Activated CD4-positive, alpha-beta T cell treated with anti-CD3 and anti-CD28 coated beads for 36 hours (primary cell): ENCODE measurements at regions of chr12 and their contacts with region 1.

Region 1: GRCh38 chr12:14239350-14239934 is 126.0 kb upstream of the ATF7IP start:
- DNase-seq: peak; percentile 63
- ATAC-seq: peak; percentile 86
- H3K4me3 Mint-ChIP-seq: peak overlapping the region; percentile 62
- H3K27ac Mint-ChIP-seq: peak overlapping the region; percentile 89
- H3K4me1 Mint-ChIP-seq: peaks cover 20% of the 10 kb centered on the region
- H3K27me3 Mint-ChIP-seq: no peaks in the 10 kb centered on the region

Region 2: GRCh38 chr12:14148489-14149270 is 90.8 kb before region 1 on chr12:
- CTCF ChIA-PET with region 1: no interaction called
- POLR2A ChIA-PET with region 1: no interaction called
- intact Hi-C with region 1: no loop called
- DNase-seq: no peak
- ATAC-seq: no peak
- H3K4me3 Mint-ChIP-seq: no peak overlapping the region
- H3K27ac Mint-ChIP-seq: no peak overlapping the region
- H3K4me1 Mint-ChIP-seq: no peaks in the 10 kb centered on the region
- H3K27me3 Mint-ChIP-seq: peaks cover 4% of the 10 kb centered on the region

Region 3: GRCh38 chr12:14216405-14217294 is 22.8 kb before region 1 on chr12:
- CTCF ChIA-PET with region 1: interaction called, 10 read pairs
- POLR2A ChIA-PET with region 1: interaction called, 4 read pairs
- intact Hi-C with region 1: no loop called
- DNase-seq: no peak
- ATAC-seq: peak; percentile 50
- H3K4me3 Mint-ChIP-seq: peak overlapping the region; percentile 21
- H3K27ac Mint-ChIP-seq: peak overlapping the region; percentile 80
- H3K4me1 Mint-ChIP-seq: peaks cover 27% of the 10 kb centered on the region
- H3K27me3 Mint-ChIP-seq: no peaks in the 10 kb centered on the region

Region 4: DNA sequence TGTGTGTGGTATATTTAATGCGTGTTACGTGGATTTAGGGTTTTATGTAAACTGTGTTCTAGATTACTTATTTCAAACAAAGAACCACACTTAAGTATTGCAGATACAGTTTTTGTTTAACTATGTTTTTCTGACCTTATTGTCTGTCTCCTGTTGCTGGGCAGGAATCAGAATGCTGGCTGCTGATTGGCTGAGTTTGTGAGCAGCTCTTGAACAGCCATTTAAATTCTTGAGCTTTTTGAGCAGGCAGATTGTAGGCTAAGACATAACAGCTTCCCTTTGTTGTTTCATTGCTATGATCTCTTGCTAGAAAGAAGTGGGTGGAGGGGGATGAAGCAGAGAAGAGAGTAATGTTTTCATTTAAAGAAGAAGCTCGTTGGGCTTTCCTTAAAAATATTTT is 178.3 kb after region 1 on chr12:
- CTCF ChIA-PET with region 1: interaction called, 9 read pairs
- POLR2A ChIA-PET with region 1: interaction called, 4 read pairs
- intact Hi-C with region 1: loop called (anchors 1 kb)
- DNase-seq: peak; percentile 86
- ATAC-seq: peak; percentile 76
- H3K4me3 Mint-ChIP-seq: peak overlapping the region; percentile 56
- H3K27ac Mint-ChIP-seq: peak overlapping the region; percentile 92
- H3K4me1 Mint-ChIP-seq: peaks cover 59% of the 10 kb centered on the region
- H3K27me3 Mint-ChIP-seq: no peaks in the 10 kb centered on the region

Region 5: DNA sequence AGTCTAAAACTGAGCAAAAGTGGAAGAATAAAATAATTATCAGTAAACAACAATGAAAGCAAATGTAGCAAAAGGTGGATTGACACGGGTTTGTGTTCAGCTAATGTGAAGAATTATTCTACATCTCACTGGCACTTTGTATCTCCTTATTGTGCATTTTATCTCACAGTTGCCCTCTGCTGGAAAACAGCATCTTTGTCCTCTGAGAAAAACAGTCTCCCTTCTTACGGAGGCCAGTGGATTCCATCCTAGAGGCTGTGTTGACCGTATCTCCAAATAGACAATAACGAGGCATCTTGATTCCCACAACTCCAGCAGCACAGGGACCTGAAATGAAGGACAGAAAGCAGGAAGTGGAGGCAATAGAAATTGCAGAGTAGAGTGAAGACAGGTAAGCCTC is 379.5 kb after region 1 on chr12:
- CTCF ChIA-PET with region 1: interaction called, 4 read pairs
- POLR2A ChIA-PET with region 1: no interaction called
- intact Hi-C with region 1: loop called (anchors 1 kb)
- DNase-seq: no peak
- ATAC-seq: peak; percentile 33
- H3K4me3 Mint-ChIP-seq: no peak overlapping the region
- H3K27ac Mint-ChIP-seq: no peak overlapping the region
- H3K4me1 Mint-ChIP-seq: no peaks in the 10 kb centered on the region
- H3K27me3 Mint-ChIP-seq: peaks cover 8% of the 10 kb centered on the region

Region 6: GRCh38 chr12:14716848-14717444 is 477.5 kb after region 1 on chr12:
- CTCF ChIA-PET with region 1: interaction called, 16 read pairs
- POLR2A ChIA-PET with region 1: no interaction called
- intact Hi-C with region 1: loop called (anchors 1 kb)
- DNase-seq: peak; percentile 61
- ATAC-seq: peak; percentile 69
- H3K4me3 Mint-ChIP-seq: no peak overlapping the region
- H3K27ac Mint-ChIP-seq: no peak overlapping the region
- H3K4me1 Mint-ChIP-seq: no peaks in the 10 kb centered on the region
- H3K27me3 Mint-ChIP-seq: peaks cover 5% of the 10 kb centered on the region